AG04449 (cell line): ENCODE measurements at regions of chr14 and their contacts with region 1.

Region 1: DNA sequence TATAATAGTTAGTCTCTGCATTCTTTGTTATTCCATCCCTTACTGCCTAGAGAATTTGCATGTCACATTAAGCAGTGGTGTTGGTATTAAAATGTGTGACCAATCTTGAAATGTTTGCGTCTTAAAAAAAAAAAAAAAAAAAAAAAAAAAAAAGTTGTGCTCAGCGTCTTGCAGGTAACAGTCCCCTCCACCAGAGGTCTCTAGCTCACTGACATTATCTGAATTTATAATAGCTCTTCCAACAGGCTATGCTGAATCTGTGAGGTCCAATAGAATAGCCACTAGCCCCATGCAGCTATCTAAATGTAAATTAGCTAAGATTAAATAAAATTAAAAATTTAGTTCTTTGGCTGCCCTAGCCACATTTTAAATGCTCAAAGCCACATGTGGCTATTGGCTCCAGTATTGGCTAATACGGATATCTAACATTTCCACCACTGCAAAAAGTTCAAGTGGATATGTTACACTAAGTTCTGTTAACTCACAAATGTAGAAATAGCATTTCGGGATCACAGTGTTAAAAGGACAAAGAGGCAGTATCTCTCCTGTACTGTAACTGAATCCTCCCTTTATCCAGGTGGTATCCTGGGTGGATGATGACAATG is 28.7 kb downstream of the NKX2-8 start:
- DNase-seq: peak; percentile 2
- H3K4me3 ChIP-seq: no peak overlapping the region
- CTCF ChIP-seq: peak; percentile 61

Region 2: DNA sequence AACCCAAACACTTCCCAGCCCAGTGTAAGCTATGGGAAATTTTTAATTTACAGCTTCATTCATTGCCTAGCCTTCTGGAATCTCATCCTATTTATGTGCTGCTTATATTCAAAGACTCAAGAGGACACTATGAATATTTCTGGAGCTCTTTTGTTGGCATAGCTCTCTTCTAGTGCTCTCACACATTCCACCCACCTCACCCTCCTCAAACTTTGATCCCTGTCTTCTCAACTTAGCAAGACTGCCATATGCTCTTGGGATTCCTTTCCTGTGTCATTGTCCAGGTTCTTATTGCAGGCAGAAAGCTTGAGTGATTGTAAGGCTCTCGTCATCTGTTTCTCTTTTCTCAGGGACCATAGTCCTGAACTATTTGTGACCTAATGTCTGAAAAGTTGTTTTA is 15.7 kb before region 1 on chr14:
- CTCF ChIA-PET with region 1: interaction called, 39 read pairs
- POLR2A ChIA-PET with region 1: no interaction called
- DNase-seq: no peak
- H3K4me3 ChIP-seq: no peak overlapping the region
- CTCF ChIP-seq: no peak

Region 3: DNA sequence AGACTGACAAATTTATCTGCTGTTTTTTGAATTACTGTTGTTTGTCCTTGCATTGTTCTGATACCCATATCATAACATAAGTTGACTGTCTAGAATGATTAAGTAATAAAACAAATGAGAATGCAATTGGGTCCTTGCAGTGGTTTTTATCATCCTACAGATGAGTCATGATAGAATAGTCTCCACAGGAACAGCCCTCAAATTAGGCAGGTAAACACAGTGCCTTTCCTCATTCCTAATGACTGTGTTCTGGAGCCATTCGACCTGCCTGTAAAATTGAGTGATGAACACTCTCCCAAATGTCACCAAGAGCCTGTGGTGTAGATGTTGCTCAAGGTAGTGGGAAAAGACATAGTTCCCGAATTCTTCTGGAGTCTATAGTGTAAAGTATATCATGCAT is 16.3 kb after region 1 on chr14:
- CTCF ChIA-PET with region 1: interaction called, 18 read pairs
- POLR2A ChIA-PET with region 1: no interaction called
- DNase-seq: no peak
- H3K4me3 ChIP-seq: no peak overlapping the region
- CTCF ChIP-seq: no peak

Region 4: DNA sequence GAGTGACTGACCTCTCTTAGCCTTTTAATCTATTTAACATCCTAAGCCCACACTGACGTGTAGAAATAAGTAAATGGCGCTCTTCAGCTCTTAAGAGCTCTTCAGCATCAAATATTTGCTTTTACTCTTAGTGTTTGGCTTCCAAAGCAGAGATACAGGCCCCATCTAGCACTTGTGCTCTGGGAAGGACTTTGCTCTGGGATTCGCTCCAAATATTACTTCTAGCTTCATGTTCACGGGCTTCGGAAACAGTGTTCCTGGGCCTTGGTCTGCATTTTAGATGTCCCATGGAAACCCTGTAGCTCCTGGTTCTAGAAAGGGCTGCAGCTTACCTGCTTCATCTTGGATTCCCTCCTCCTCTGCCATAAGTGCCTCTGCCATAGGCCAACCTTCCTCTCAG is 31.3 kb after region 1 on chr14:
- CTCF ChIA-PET with region 1: interaction called, 15 read pairs
- POLR2A ChIA-PET with region 1: no interaction called
- DNase-seq: no peak
- H3K4me3 ChIP-seq: no peak overlapping the region
- CTCF ChIP-seq: no peak

Region 5: GRCh38 chr14:36604757-36605505 is 51.2 kb after region 1 on chr14:
- CTCF ChIA-PET with region 1: interaction called, 46 read pairs
- POLR2A ChIA-PET with region 1: no interaction called
- DNase-seq: peak; percentile 10
- H3K4me3 ChIP-seq: no peak overlapping the region
- CTCF ChIP-seq: peak; percentile 77

Region 6: GRCh38 chr14:37116933-37117849 is 563.4 kb after region 1 on chr14:
- CTCF ChIA-PET with region 1: interaction called, 17 read pairs
- POLR2A ChIA-PET with region 1: no interaction called
- DNase-seq: no peak
- H3K4me3 ChIP-seq: no peak overlapping the region
- CTCF ChIP-seq: peak; percentile 55